Left lung (tissue), 14 donors: ENCODE measurements at regions of chr11 and their contacts with region 1.

Region 1: DNA sequence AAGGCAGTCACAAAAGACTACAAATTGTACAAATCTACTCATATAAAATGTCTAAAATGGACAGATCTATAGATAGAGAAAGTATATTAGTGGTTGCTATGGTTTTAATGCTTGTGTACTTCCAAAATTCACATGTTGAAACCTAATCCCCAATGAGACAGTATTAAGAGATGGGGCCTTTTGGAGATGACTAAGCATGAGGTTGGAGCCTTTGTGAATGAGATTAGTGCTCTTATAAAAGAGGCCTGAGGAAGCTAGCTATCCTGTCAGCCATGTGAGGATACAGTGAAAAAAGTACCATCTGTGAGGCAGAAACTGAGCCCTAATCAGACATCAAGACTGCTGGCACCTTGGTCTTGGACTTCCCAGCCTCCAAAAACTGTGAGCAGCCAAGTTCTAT is 82.6 kb downstream of the CYP2R1 start:
- DNase-seq: no peak
- ATAC-seq: no peak
- H3K4me3 ChIP-seq: no peak overlapping the region
- H3K27ac ChIP-seq: no peak overlapping the region
- H3K4me1 ChIP-seq: peaks cover 0 to 7% of the 10 kb centered on the region in 2 donors
- H3K27me3 ChIP-seq: no peaks in the 10 kb centered on the region
- CTCF ChIP-seq: no peak

Region 2: DNA sequence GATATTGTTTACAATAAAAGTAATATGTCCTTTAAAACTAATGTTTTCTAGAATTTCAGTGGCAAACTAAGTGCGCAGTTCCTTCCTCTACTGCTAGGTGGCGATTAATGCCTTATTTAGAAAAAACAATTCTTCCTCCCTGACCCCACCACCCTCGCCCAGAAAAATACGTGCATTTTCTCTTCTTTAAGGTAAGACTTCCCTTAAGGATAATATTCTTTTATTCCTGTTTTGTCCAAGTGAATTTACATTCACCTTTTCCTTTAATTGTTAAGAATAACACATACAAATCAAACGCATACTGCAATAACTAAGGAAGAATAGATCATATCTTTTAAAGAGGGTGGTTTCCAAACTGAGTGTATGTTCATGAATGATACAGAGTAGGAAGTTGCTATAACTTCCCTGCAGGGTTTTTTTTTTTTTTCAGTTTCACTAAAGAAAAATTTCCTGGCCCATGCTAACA is 272.3 kb before region 1 on chr11:
- intact Hi-C with region 1: loop called in 1 of 2 experiments (anchors 10 kb)
- DNase-seq: peak in 2 of 4 donors; percentile 32 to 48
- ATAC-seq: peak; percentile 73
- H3K4me3 ChIP-seq: no peak overlapping the region
- H3K27ac ChIP-seq: peak overlapping the region in 1 of 2 donors; percentile 42
- H3K4me1 ChIP-seq: peaks cover 0 to 50% of the 10 kb centered on the region in 2 donors
- H3K27me3 ChIP-seq: no peaks in the 10 kb centered on the region
- CTCF ChIP-seq: peak; percentile 74 to 83

Region 3: DNA sequence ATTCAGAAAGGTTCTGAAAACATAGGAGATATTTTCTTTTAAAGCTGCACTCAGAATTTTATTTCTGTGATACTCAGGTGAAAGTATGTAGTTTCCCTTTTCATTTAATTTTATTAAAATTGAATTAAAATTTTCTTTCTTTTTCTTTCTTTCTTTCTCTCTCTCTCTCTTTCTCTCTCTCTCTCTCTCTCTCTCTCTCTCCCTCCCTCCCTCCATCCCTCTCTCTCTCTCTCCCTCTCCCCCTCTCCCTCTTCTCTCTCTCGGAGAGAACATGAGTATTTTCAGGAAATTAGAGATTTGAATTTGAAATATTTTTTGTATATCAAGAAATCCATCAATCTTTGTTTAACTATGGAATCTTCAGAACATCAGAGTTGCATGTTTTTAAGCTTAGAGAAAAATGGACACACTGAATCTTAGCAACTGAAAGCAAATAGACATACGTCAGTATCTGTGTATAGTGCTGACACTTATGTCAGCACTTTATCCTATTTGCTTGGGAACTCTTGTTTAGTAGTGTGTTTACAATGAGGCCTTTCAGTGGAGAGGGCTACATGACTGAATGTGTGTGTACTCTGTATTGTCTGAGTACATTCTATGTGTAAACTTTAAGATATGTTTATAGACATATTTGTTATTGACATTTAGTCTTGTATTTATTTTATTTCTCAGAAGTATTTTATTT is 121.4 kb before region 1 on chr11:
- intact Hi-C with region 1: no loop called
- DNase-seq: peak in 1 of 4 donors; percentile 44
- ATAC-seq: peak; percentile 56
- H3K4me3 ChIP-seq: no peak overlapping the region
- H3K27ac ChIP-seq: no peak overlapping the region
- H3K4me1 ChIP-seq: no peaks in the 10 kb centered on the region
- H3K27me3 ChIP-seq: no peaks in the 10 kb centered on the region
- CTCF ChIP-seq: no peak

Region 4: GRCh38 chr11:14886513-14886912 is 77.0 kb after region 1 on chr11:
- intact Hi-C with region 1: no loop called
- DNase-seq: no peak
- ATAC-seq: peak; percentile 54
- H3K4me3 ChIP-seq: no peak overlapping the region
- H3K27ac ChIP-seq: no peak overlapping the region
- H3K4me1 ChIP-seq: peaks cover 0 to 53% of the 10 kb centered on the region in 2 donors
- H3K27me3 ChIP-seq: no peaks in the 10 kb centered on the region
- CTCF ChIP-seq: no peak